Activated CD8-positive, alpha-beta T cell treated with anti-CD3 and anti-CD28 coated beads, Interleukin-2, amount 10 ng/mL, durations not matched to agents 7 days and 5 days (primary cell): ENCODE measurements at regions of chr2 and their contacts with region 1.

Region 1: DNA sequence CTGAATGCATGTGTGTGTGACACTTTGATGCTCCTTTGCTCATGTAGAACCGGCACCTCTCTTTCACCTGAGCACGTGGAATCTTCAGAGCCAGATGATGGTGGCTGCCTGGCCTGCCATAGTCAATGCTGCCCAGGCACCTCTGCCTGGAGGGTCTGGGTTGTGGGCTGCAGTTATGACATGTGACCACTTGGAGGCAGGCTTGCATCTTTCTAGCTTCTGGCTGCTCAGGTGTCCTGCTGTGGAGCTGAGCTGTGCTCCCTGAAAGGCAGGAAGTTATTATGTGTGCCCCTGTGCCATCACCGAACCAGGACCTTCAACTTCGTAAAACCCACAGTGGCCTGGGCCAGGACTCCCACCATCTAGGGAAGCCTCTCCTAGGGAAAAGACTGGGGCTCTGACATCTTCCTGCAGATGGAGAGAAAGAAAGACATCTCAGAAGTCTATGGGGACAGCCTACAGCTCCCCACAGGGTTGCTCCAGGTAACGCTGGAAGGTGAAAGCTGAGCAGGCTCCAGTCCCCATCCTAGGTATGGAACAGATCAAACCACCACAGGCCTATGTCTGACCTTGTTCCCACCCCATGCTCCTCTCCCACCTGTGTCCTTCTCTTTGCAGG is 30.2 kb downstream of the PSD4 start:
- DNase-seq: peak; percentile 86
- ATAC-seq: peak; percentile 80
- H3K4me3 Mint-ChIP-seq: no peak overlapping the region
- H3K27ac Mint-ChIP-seq: peak overlapping the region; percentile 78
- H3K4me1 Mint-ChIP-seq: peaks cover 20% of the 10 kb centered on the region
- H3K27me3 Mint-ChIP-seq: no peaks in the 10 kb centered on the region

Region 2: DNA sequence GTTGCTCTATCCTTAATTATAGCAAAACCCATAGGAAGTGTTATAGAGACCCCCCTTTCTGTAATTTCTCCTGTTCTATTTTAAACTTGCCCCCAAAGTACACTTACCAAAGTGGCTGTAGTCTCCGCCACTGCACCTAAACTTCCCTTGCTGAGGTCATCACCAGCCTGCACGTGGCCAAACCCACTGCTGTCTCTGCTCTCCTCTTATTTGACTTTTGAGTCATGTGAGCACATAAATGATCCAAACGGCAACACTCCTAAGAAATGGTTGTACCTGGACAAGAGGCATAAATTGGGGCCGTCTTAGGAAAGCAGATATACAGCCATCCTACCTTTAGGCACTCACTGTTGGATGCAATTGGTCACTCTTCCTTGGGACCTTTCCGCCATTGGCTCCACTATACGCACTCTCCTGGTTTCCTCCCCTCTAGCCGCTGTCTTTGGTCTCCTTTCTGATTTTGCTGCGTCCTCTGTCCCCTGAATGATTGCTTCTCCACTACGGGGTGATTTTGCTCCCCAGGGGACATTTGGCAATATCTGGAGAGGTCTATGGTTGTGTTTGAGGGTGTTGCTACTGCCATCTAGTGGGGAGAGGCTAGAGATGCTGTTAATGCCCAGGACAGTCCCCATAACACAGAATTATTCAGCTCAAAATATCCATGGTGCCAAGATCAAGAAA is 245.4 kb before region 1 on chr2:
- CTCF ChIA-PET with region 1: no interaction called
- POLR2A ChIA-PET with region 1: no interaction called
- DNase-seq: peak; percentile 57
- ATAC-seq: peak; percentile 86
- H3K4me3 Mint-ChIP-seq: no peak overlapping the region
- H3K27ac Mint-ChIP-seq: no peak overlapping the region
- H3K4me1 Mint-ChIP-seq: no peaks in the 10 kb centered on the region
- H3K27me3 Mint-ChIP-seq: peaks cover 3% of the 10 kb centered on the region

Region 3: DNA sequence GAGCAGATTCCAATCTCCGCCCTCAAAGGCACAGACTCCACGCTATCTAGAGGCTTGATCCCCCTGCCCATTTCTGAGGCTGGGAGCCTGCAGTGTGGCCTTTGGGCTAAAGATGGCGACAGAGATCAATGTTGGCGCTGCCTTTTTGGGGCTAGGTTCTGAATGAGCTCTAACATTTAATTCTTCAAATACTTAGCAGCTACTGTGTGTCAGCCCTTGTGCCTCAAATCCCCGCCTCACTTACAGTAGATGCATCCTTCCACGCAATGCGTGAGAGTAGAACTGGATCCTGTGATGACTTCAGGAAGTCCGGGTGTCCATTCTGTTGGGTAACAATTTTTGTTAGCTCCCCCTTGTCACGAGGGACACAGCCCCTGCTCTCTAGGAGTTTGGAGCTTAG is 123.9 kb before region 1 on chr2:
- CTCF ChIA-PET with region 1: interaction called, 29 read pairs
- POLR2A ChIA-PET with region 1: no interaction called
- DNase-seq: peak; percentile 61
- ATAC-seq: peak; percentile 42
- H3K4me3 Mint-ChIP-seq: no peak overlapping the region
- H3K27ac Mint-ChIP-seq: no peak overlapping the region
- H3K4me1 Mint-ChIP-seq: peaks cover 19% of the 10 kb centered on the region
- H3K27me3 Mint-ChIP-seq: peaks cover 8% of the 10 kb centered on the region

Region 4: GRCh38 chr2:113173542-113174395 is 30.2 kb before region 1 on chr2 and contains the start of gene PSD4:
- CTCF ChIA-PET with region 1: interaction called, 30 read pairs
- POLR2A ChIA-PET with region 1: interaction called, 17 read pairs
- DNase-seq: peak; percentile 96
- ATAC-seq: peak; percentile 75
- H3K4me3 Mint-ChIP-seq: peak within 1 kb of the TSS; percentile 83
- H3K27ac Mint-ChIP-seq: peak within 1 kb of the TSS; percentile 91
- H3K4me1 Mint-ChIP-seq: peaks cover 70% of the 10 kb centered on the region
- H3K27me3 Mint-ChIP-seq: peaks cover 2% of the 10 kb centered on the region
- total RNA-seq, gene PSD4: 394 to 404 TPM

Region 5: DNA sequence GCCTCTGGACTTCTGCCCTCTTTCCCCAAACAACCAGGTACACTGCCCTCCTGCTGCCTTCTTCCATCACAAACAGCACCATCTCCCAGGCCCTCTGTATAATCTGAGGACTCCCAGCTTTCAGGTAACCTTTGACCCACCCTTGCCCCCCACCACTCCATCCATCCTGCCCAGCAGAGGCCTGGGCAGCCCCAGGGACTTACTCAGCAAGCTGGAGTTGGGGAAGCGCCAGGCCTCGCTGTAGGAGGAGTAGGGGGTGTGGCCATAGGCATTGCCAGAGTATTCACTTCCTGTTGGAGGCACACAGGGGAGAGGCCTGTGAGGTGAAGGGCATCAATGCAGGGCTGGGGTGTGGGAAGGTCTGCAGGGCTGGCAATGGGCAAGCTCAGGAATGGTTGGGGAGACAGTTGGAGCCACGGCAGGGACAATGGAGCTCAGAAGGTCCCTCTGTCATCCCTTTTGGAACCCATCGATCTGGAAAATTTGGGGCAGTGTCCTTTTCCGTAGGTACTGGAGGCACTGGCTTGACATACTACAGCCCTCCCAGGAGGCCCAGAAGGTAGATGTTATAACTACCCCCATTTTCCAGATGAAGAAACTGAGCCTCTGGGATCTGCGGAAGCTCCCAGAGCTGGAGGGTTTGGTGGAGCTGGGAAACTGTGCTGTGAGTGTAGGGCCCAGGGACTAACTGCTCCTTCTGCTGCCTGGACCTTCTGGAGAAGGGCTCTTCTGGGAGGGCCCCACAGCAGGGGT is 16.1 kb after region 1 on chr2:
- CTCF ChIA-PET with region 1: interaction called, 19 read pairs
- POLR2A ChIA-PET with region 1: interaction called, 4 read pairs
- DNase-seq: no peak
- ATAC-seq: no peak
- H3K4me3 Mint-ChIP-seq: no peak overlapping the region
- H3K27ac Mint-ChIP-seq: no peak overlapping the region
- H3K4me1 Mint-ChIP-seq: peaks cover 33% of the 10 kb centered on the region
- H3K27me3 Mint-ChIP-seq: peaks cover 5% of the 10 kb centered on the region

Region 6: GRCh38 chr2:113240150-113240862 is 36.3 kb after region 1 on chr2:
- CTCF ChIA-PET with region 1: interaction called, 91 read pairs
- POLR2A ChIA-PET with region 1: no interaction called
- DNase-seq: no peak
- ATAC-seq: no peak
- H3K4me3 Mint-ChIP-seq: no peak overlapping the region
- H3K27ac Mint-ChIP-seq: no peak overlapping the region
- H3K4me1 Mint-ChIP-seq: peaks cover 17% of the 10 kb centered on the region
- H3K27me3 Mint-ChIP-seq: peaks cover 3% of the 10 kb centered on the region

Region 7: GRCh38 chr2:113309655-113310387 is 105.8 kb after region 1 on chr2:
- CTCF ChIA-PET with region 1: no interaction called
- POLR2A ChIA-PET with region 1: no interaction called
- DNase-seq: no peak
- ATAC-seq: no peak
- H3K4me3 Mint-ChIP-seq: no peak overlapping the region
- H3K27ac Mint-ChIP-seq: no peak overlapping the region
- H3K4me1 Mint-ChIP-seq: peaks cover 3% of the 10 kb centered on the region
- H3K27me3 Mint-ChIP-seq: peaks cover 42% of the 10 kb centered on the region

Region 8: DNA sequence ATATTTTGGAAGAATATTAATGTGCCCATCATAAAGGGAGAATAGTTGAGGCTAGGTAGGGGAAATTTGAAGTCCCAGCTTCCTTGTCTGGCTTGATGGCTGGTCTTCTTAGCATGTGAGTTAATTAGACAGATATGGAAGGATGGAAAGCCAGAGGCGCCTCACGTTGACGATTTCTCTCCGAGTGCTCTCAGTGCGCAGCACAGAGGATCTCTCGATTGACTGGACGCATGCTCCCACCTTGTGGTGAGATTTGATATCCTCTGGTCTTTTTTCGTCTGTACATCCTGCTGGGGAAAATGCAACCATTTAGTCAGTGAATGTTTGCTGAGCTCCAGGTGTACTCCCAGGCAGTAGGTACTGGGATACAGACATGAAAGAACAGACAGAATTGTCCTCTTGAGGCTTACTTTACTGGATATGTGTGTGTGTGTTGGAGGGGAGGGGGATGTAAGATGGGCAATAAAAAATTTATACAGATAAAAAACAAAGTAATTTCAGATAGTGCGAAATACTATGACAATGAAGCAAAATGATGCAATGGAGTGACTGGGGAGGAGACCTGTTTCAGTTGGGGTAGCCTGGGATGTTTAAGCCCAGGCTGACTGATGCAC is 166.6 kb after region 1 on chr2:
- CTCF ChIA-PET with region 1: interaction called, 29 read pairs
- POLR2A ChIA-PET with region 1: no interaction called
- DNase-seq: peak; percentile 86
- ATAC-seq: peak; percentile 99
- H3K4me3 Mint-ChIP-seq: no peak overlapping the region
- H3K27ac Mint-ChIP-seq: no peak overlapping the region
- H3K4me1 Mint-ChIP-seq: peaks cover 35% of the 10 kb centered on the region
- H3K27me3 Mint-ChIP-seq: peaks cover 11% of the 10 kb centered on the region